H1 (cell line): ENCODE measurements at regions of chr3 and their contacts with region 1.

Region 1: DNA sequence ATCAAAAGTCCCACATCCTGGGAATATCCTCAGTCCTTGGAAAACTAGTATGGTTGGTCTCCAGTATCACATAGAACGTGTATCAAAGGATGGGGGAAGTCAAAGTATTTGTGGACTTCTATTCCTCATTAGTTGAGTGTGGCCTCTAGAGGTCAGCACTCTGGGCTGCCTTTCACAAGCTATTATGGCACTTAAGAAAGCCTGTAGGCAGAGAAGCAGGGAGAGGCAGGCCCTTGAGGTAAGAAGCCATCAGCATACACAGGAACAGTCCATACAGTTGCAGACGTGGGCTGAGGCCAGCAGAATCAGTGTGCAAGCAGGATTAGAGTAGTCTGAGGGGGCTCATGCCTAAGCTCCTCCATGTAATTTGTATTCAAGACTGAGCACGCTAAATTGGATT is 341.7 kb downstream of the CLSTN2 start:
- DNase-seq: peak in 1 of 2 experiments; percentile 17
- H3K4me3 ChIP-seq: no peak overlapping the region
- H3K27ac ChIP-seq: no peak overlapping the region
- H3K4me1 ChIP-seq: no peaks in the 10 kb centered on the region; a peak in 1 of 7 replicates
- H3K27me3 ChIP-seq: no peaks in the 10 kb centered on the region
- CTCF ChIP-seq: peak in 2 of 3 experiments; percentile 58 to 64; a peak in 3 of 4 replicates
- EP300 ChIP-seq: no peak
- POLR2A ChIP-seq: no peak
- RAD21 ChIP-seq: peak; percentile 53 to 72

Region 2: DNA sequence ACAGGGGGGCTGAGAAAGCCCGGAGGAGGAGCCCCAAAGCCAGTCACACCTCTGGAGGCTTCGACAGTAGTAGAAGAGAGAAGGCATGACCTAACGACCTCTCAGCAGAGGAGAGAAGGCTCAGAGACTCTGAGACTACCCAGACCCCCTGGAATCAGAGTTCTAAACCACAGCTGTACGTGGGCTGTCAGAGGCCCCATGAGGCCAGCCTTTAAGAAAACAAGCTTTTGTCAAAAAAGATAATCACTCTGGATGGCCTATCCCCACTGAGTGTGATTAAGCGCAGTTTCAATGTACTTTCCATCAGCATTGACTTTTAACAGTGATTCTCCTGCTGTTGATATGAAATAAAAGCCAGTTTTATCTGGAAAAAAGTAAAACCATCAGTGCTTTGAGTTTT is 11.4 kb before region 1 on chr3:
- CTCF ChIA-PET with region 1: interaction called, 22 read pairs
- POLR2A ChIA-PET with region 1: no interaction called
- DNase-seq: no peak
- H3K4me3 ChIP-seq: no peak overlapping the region
- H3K27ac ChIP-seq: no peak overlapping the region
- H3K4me1 ChIP-seq: peaks cover 0 to 12% (median 6%) of the 10 kb centered on the region in 4 experiments; a peak in 4 of 7 replicates
- H3K27me3 ChIP-seq: no peaks in the 10 kb centered on the region
- CTCF ChIP-seq: no peak
- EP300 ChIP-seq: no peak
- POLR2A ChIP-seq: no peak
- RAD21 ChIP-seq: no peak

Region 3: DNA sequence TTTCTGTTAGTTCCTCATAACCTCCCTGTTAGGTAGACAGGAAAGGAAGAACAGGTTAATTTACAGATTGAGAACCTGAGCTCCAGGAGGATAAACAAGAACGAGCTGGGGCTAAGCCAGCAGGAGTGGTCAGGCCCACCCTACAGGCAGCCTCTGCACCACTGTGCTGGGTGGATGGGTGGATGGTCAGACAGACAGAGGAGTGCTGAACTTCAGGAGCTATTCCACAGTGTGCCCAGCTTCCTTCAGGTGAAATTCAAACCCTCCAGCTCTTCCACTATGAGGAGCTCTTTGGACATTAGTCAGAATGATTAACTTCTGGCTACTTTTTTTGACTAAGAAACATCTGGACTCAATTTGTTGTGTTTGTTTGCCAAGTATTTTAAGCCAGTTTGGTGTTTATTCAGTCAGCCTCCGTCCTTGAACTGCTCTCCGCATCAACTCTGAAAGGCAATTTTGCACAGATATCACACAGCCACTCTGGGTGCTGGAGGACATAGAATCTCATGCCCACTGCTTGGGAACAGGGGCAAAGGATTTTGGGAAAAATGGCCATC is 20.2 kb after region 1 on chr3:
- CTCF ChIA-PET with region 1: interaction called, 28 read pairs
- POLR2A ChIA-PET with region 1: no interaction called
- DNase-seq: no peak
- H3K4me3 ChIP-seq: no peak overlapping the region
- H3K27ac ChIP-seq: no peak overlapping the region
- H3K4me1 ChIP-seq: peaks cover 0 to 21% (median 17%) of the 10 kb centered on the region in 4 experiments; a peak in 5 of 7 replicates
- H3K27me3 ChIP-seq: no peaks in the 10 kb centered on the region
- CTCF ChIP-seq: no peak
- EP300 ChIP-seq: no peak
- POLR2A ChIP-seq: no peak
- RAD21 ChIP-seq: no peak

Region 4: DNA sequence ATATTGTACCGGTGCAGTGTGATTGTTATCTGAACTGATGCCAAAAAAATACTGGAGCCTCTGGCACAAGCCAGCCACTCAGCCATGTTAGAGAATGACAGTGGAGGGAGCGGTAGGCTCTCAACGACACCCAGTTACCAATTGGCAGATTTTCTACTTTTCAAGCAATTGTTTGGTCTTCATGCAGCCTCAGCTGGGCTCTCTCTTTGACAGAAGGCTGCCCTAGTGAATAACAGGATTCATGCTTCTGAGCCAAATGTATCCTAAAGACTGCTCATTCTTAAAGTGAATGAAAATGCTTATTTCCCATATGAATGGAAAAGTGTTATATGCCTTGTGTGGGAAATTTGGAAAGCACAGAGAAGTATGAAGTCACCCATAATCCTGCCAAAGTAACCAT is 140.0 kb after region 1 on chr3:
- CTCF ChIA-PET with region 1: no interaction called
- POLR2A ChIA-PET with region 1: no interaction called
- DNase-seq: no peak
- H3K4me3 ChIP-seq: no peak overlapping the region
- H3K27ac ChIP-seq: no peak overlapping the region
- H3K4me1 ChIP-seq: no peaks in the 10 kb centered on the region
- H3K27me3 ChIP-seq: no peaks in the 10 kb centered on the region
- CTCF ChIP-seq: no peak
- EP300 ChIP-seq: no peak
- POLR2A ChIP-seq: no peak
- RAD21 ChIP-seq: no peak